ENCODE measurements at regions of chr7 and their contacts with region 1.

Region 1: GRCh38 chr7:47818796-47819606 is 129.3 kb downstream of the PKD1L1 start:
- DNase-seq: peak; percentile 82
- ATAC-seq: peak; percentile 89
- H3K4me3 ChIP-seq: no peak overlapping the region
- H3K27ac ChIP-seq: no peak overlapping the region
- H3K4me1 ChIP-seq: peaks cover 4% of the 10 kb centered on the region
- H3K27me3 ChIP-seq: no peaks in the 10 kb centered on the region
- CTCF ChIP-seq: peak; percentile 95
- POLR2A ChIP-seq: no peak; the same call in 1 of the 2 replicates
- RAD21 ChIP-seq: peak; percentile 96

Region 2: GRCh38 chr7:47080816-47081215 is 738.2 kb before region 1 on chr7:
- CTCF ChIA-PET with region 1: no interaction called
- POLR2A ChIA-PET with region 1: no interaction called
- dilution Hi-C with region 1: no loop called
- in situ Hi-C with region 1: no loop called
- intact Hi-C with region 1: no loop called
- DNase-seq: peak; percentile 73
- ATAC-seq: peak; percentile 96
- H3K4me3 ChIP-seq: no peak overlapping the region
- H3K27ac ChIP-seq: no peak overlapping the region
- H3K4me1 ChIP-seq: peaks cover 3% of the 10 kb centered on the region
- H3K27me3 ChIP-seq: 0 out of 2 replicates have a peak, but pooled peaks cover 2% of the 10 kb centered on the region
- CTCF ChIP-seq: no peak
- POLR2A ChIP-seq: no peak
- RAD21 ChIP-seq: no peak; the same call in 1 of the 2 replicates

Region 3: DNA sequence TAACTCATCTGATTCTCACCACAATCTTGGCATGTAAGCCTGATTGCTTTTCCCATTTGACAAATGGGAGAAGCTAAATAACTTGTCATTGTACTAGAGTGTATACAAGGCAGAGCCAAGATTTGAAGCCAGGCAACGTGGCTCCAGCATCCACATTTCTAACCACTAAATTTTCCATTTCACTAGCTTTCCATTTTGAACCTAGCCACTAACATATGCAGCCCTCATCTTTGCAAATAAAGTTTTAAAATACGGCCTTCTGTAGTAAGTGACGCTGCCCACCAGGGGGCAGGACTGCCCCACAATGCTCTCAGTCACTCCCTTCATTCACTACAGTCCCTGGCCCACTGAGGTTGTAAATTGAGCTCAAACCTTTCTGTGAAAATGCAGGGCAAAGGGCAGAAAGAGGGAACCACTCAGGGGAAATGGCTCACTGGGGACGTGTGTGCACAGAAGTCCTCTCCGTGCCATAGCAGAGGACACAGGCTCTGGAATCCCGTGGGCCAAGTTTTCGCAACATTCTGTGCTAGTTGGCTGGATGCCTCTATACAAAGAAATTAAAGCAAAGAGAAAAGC is 552.8 kb before region 1 on chr7:
- CTCF ChIA-PET with region 1: no interaction called
- POLR2A ChIA-PET with region 1: no interaction called
- dilution Hi-C with region 1: no loop called
- in situ Hi-C with region 1: loop called (anchors 10 kb)
- intact Hi-C with region 1: loop called (anchors 2 kb)
- DNase-seq: peak; percentile 68
- ATAC-seq: peak; percentile 97
- H3K4me3 ChIP-seq: no peak overlapping the region
- H3K27ac ChIP-seq: no peak overlapping the region
- H3K4me1 ChIP-seq: peaks cover 5% of the 10 kb centered on the region; the same call in 1 of the 2 replicates
- H3K27me3 ChIP-seq: no peaks in the 10 kb centered on the region
- CTCF ChIP-seq: peak; percentile 91
- POLR2A ChIP-seq: 0 out of 2 replicates have a peak, but pooled peaks have one; percentile 35
- RAD21 ChIP-seq: peak; percentile 94

Region 4: GRCh38 chr7:47435889-47436312 is 383.1 kb before region 1 on chr7:
- CTCF ChIA-PET with region 1: interaction called, 5 read pairs
- POLR2A ChIA-PET with region 1: no interaction called
- dilution Hi-C with region 1: no loop called
- in situ Hi-C with region 1: loop called (anchors 5 kb)
- intact Hi-C with region 1: loop called (anchors 1 kb)
- DNase-seq: peak; percentile 81
- ATAC-seq: peak; percentile 94
- H3K4me3 ChIP-seq: no peak overlapping the region
- H3K27ac ChIP-seq: no peak overlapping the region
- H3K4me1 ChIP-seq: 0 out of 2 replicates have a peak, but pooled peaks cover 2% of the 10 kb centered on the region
- H3K27me3 ChIP-seq: no peaks in the 10 kb centered on the region
- CTCF ChIP-seq: peak; percentile 65
- POLR2A ChIP-seq: no peak
- RAD21 ChIP-seq: peak; percentile 80

Region 5: GRCh38 chr7:47513741-47514241 is 305.2 kb before region 1 on chr7:
- CTCF ChIA-PET with region 1: no interaction called
- POLR2A ChIA-PET with region 1: no interaction called
- dilution Hi-C with region 1: no loop called
- in situ Hi-C with region 1: no loop called
- intact Hi-C with region 1: loop called (anchors 5 kb)
- DNase-seq: peak; percentile 93
- ATAC-seq: peak; percentile 92
- H3K4me3 ChIP-seq: no peak overlapping the region
- H3K27ac ChIP-seq: peak overlapping the region; percentile 27
- H3K4me1 ChIP-seq: peaks cover 25% of the 10 kb centered on the region
- H3K27me3 ChIP-seq: no peaks in the 10 kb centered on the region
- CTCF ChIP-seq: no peak
- POLR2A ChIP-seq: no peak
- RAD21 ChIP-seq: peak; percentile 0

Region 6: DNA sequence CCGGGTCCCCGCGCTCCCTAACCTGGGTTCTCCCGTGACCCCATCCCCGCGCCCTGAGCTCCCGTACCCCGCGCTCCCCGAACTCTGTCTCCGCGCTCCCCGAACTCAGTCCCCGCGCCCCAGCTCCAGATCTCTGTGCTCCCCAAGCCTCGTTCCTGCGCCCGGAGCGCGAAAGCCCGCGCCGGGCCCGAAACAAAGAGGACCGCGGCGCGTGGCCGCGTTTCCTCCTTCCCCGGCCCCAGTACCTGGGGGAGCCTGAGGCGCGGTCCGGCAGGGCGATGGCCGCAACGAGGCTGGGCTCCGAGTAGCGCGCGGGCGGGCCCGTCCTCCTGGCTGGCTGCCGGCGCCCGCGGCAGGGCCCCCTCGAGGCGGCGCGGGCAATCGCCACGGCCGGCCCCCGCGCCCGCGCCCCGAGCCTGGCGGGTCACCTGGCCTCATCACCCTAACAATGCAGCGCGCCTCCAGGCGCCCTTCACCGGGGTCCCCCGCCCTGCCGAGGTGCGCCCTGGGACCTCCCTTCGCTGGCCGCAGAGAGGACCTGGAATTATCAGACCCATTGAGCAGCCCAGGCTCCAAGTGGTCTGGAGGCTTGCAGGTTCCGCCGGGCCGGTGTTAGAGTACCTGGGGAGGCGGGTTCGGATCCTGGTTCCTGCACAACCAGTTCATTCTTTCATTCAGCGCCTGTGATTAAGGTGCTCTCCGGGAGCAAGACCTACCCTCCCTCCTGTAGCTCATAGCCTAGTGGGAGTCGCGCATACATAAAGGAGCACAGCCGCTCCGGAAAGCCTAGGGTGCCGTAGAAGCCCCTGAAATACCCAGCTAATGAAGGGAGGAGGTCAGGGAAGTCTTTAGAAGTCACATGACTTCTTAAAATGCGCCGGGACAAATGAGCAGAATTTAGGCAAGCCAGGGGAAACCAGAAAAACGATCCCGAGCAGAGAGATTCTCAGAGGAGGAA is 236.9 kb before region 1 on chr7 and contains the start of gene TNS3:
- CTCF ChIA-PET with region 1: interaction called, 3 read pairs
- POLR2A ChIA-PET with region 1: no interaction called
- dilution Hi-C with region 1: no loop called
- in situ Hi-C with region 1: loop called (anchors 10 kb)
- intact Hi-C with region 1: loop called (anchors 1 kb)
- DNase-seq: peak; percentile 36
- ATAC-seq: peak; percentile 73
- H3K4me3 ChIP-seq: peak within 1 kb of the TSS; percentile 79
- H3K27ac ChIP-seq: peak within 1 kb of the TSS; percentile 77
- H3K4me1 ChIP-seq: peaks cover 33% of the 10 kb centered on the region
- H3K27me3 ChIP-seq: no peaks in the 10 kb centered on the region
- CTCF ChIP-seq: peak; percentile 47
- POLR2A ChIP-seq: peak; percentile 64; the same call in 1 of the 2 replicates
- RAD21 ChIP-seq: peak; percentile 34
- total RNA-seq, gene TNS3: 58.9 and 64.3 TPM in 2 replicates

Region 7: DNA sequence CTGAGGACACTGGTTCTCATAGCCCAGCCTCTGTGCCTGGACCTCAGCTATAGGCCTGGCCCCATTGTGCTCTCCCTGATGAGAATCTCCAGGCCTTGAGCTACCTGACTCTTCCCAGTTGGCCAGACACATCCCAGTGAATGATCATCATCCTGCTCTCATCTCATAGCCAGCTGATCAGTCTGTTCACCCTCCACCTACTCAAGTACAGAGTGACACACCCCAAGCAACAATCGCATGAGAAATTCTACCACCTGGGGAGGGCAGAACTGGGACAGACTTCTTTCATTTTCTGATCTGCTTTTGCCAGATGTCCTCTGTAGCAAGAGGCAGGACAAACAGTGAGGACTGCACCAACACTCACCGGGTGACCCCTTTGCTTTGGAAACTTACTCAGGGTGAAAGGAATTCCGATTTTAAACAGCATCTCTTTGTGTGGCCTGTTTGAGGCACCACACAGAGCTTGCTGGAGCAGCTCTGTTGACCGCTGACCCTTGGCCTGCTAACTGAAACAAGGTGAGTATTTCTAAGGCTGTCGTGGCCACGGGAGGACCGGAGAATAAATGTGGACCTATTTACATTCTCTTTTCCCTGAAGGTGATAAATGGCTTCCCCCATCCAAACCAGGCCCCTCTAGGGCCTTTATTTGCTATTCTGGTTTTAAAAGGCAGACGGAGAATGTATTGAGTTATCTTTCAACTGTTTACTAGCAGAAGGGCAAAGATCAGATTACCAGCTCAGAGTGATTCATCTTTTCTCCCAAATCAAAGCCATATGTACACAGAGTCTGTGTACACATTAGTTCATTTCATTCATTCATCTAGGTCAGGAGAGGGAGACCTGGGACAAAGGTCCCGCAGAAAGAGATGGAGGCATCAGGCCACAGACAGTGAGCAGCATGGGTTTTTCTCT is 55.7 kb before region 1 on chr7:
- CTCF ChIA-PET with region 1: no interaction called
- POLR2A ChIA-PET with region 1: no interaction called
- dilution Hi-C with region 1: no loop called
- in situ Hi-C with region 1: no loop called
- intact Hi-C with region 1: loop called (anchors 5 kb)
- DNase-seq: peak; percentile 96
- ATAC-seq: peak; percentile 86
- H3K4me3 ChIP-seq: no peak overlapping the region
- H3K27ac ChIP-seq: peak overlapping the region; percentile 74
- H3K4me1 ChIP-seq: peaks cover 16% of the 10 kb centered on the region
- H3K27me3 ChIP-seq: no peaks in the 10 kb centered on the region
- CTCF ChIP-seq: no peak
- POLR2A ChIP-seq: no peak
- RAD21 ChIP-seq: no peak